Activated CD4-positive, alpha-beta memory T cell treated with anti-CD3 and anti-CD28 coated beads for 36 hours (primary cell): ENCODE measurements at regions of chr10 and their contacts with region 1.

Region 1: GRCh38 chr10:119725828-119726675 is at the start of gene INPP5F:
- DNase-seq: peak; percentile 100
- H3K4me3 Mint-ChIP-seq: peak within 1 kb of the TSS; percentile 91
- H3K27ac Mint-ChIP-seq: peak within 1 kb of the TSS; percentile 76
- H3K4me1 Mint-ChIP-seq: peaks cover 42% of the 10 kb centered on the region
- H3K27me3 Mint-ChIP-seq: no peaks in the 10 kb centered on the region
- total RNA-seq, gene INPP5F: 12.8 to 13.6 TPM

Region 2: GRCh38 chr10:119596537-119597404 is 129.3 kb before region 1 on chr10 and contains the start of gene TIAL1:
- CTCF ChIA-PET with region 1: no interaction called
- POLR2A ChIA-PET with region 1: no interaction called
- intact Hi-C with region 1: loop called (anchors 2 kb)
- DNase-seq: peak; percentile 97
- H3K4me3 Mint-ChIP-seq: peak within 1 kb of the TSS; percentile 89
- H3K27ac Mint-ChIP-seq: peak within 1 kb of the TSS; percentile 97
- H3K4me1 Mint-ChIP-seq: peaks cover 42% of the 10 kb centered on the region
- H3K27me3 Mint-ChIP-seq: no peaks in the 10 kb centered on the region
- total RNA-seq, gene TIAL1: 177 TPM

Region 3: GRCh38 chr10:119705434-119705831 is 20.6 kb before region 1 on chr10:
- CTCF ChIA-PET with region 1: interaction called, 35 read pairs
- POLR2A ChIA-PET with region 1: interaction called, 18 read pairs
- intact Hi-C with region 1: loop called (anchors 1 kb)
- DNase-seq: peak; percentile 51
- H3K4me3 Mint-ChIP-seq: peak overlapping the region; percentile 55
- H3K27ac Mint-ChIP-seq: peak overlapping the region; percentile 92
- H3K4me1 Mint-ChIP-seq: peaks cover 79% of the 10 kb centered on the region
- H3K27me3 Mint-ChIP-seq: no peaks in the 10 kb centered on the region

Region 4: DNA sequence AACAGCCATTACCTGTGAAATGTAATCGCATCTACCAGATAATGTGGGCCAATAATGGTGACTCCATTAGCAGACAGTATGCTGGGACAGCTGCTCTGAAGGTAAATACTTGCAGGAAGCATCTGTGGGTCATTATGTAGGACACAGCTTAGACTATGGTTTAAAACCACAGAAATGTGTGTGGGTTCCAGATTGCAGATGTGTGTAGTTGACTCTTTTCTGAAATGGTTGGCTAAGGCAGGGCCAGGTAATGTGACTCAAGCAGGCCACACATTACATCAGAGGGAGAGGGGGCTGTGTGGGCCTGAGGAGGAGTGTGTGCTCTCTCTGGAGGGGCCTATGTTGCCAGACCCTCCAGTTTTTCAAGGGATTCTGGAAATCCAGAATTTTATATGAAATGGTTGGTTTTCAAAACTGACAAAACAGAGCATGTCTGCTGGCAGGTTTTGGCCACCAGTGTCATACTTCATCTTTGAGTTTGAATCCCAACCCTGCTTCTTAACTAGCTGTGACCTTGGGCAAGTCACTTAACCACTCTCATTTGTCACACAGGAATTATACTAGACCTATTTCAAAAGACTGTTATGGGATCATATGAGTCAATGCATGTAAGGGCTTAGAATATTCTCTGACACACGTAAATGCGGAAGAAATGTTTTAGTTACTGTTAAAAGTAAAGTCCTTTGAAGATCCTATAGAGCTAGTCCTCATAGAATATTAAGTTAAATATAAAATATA is 82.1 kb after region 1 on chr10:
- CTCF ChIA-PET with region 1: no interaction called
- POLR2A ChIA-PET with region 1: no interaction called
- intact Hi-C with region 1: no loop called
- DNase-seq: no peak
- H3K4me3 Mint-ChIP-seq: no peak overlapping the region
- H3K27ac Mint-ChIP-seq: no peak overlapping the region
- H3K4me1 Mint-ChIP-seq: peaks cover 7% of the 10 kb centered on the region
- H3K27me3 Mint-ChIP-seq: no peaks in the 10 kb centered on the region